ENCODE measurements at regions of chr5 and their contacts with region 1.

Region 1: GRCh38 chr5:34459908-34460307 is 196.2 kb upstream of the RAI14 start:
- DNase-seq: no peak
- H3K4me3 ChIP-seq: no peak overlapping the region
- H3K27ac ChIP-seq: no peak overlapping the region
- H3K4me1 ChIP-seq: no peaks in the 10 kb centered on the region
- H3K27me3 ChIP-seq: no peaks in the 10 kb centered on the region
- CTCF ChIP-seq: no peak
- POLR2A ChIP-seq: no peak

Region 2: GRCh38 chr5:33997331-33997983 is 462.5 kb before region 1 on chr5:
- intact Hi-C with region 1: loop called (anchors 10 kb)
- DNase-seq: peak; percentile 73 to 81
- H3K4me3 ChIP-seq: no peak overlapping the region
- H3K27ac ChIP-seq: no peak overlapping the region
- H3K4me1 ChIP-seq: no peaks in the 10 kb centered on the region
- H3K27me3 ChIP-seq: no peaks in the 10 kb centered on the region
- CTCF ChIP-seq: peak in 5 of 6 experiments; percentile 28 to 75 (median 66)
- POLR2A ChIP-seq: no peak

Region 3: GRCh38 chr5:34411470-34412384 is 48.2 kb before region 1 on chr5:
- intact Hi-C with region 1: no loop called
- DNase-seq: no peak
- H3K4me3 ChIP-seq: no peak overlapping the region
- H3K27ac ChIP-seq: no peak overlapping the region
- H3K4me1 ChIP-seq: no peaks in the 10 kb centered on the region
- H3K27me3 ChIP-seq: no peaks in the 10 kb centered on the region
- CTCF ChIP-seq: no peak
- POLR2A ChIP-seq: no peak

Region 4: GRCh38 chr5:34598177-34598794 is 138.4 kb after region 1 on chr5:
- intact Hi-C with region 1: no loop called
- DNase-seq: no peak
- H3K4me3 ChIP-seq: no peak overlapping the region
- H3K27ac ChIP-seq: no peak overlapping the region
- H3K4me1 ChIP-seq: no peaks in the 10 kb centered on the region
- H3K27me3 ChIP-seq: no peaks in the 10 kb centered on the region
- CTCF ChIP-seq: no peak
- POLR2A ChIP-seq: no peak

Measured in thyroid gland (tissue), 4 donors.